Panc1 (cell line): ENCODE measurements at regions of chr2 and their contacts with region 1.

Region 1: GRCh38 chr2:240913810-240914644 is 7.9 kb downstream of the CROCC2 start:
- DNase-seq: peak; percentile 24
- ATAC-seq: peak; percentile 71
- H3K4me3 ChIP-seq: peak overlapping the region in 1 of 2 experiments; percentile 12; a peak in 1 of 4 replicates
- H3K27ac ChIP-seq: no peak overlapping the region
- H3K4me1 ChIP-seq: peaks cover 39% of the 10 kb centered on the region
- H3K27me3 ChIP-seq: no peaks in the 10 kb centered on the region
- CTCF ChIP-seq: peak; percentile 99

Region 2: DNA sequence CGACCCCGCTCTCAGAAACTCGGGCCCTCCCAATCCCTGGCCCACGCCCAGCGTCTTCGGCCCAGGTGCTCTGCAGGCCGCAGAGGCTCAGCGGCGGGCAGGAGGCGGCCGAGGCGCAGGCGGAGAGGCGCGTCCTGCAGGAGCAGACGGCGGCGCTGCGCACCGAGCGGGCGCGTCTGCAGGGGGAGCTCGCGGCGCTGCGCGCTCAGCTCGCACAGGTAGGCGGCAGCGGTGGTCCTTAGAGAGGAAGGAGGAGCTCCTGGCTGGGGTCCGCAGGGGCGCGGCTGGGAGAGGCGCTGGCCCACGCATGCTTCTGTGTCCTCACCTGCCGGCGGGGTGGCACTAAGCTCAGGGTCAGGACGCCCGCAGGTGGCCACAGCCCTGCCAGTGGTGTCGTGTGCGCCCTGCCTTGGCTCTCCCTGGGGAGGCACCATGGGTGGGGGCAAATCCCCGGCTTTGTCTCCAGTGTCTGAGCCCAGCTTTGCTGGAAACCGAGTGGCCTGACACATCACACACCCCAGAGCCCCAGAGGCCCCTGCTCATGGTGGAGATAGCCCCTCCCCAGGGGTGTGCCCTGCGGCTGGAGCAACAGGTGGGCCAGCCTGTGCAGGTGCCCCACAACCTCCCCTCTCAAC is 69.5 kb after region 1 on chr2:
- CTCF ChIA-PET with region 1: interaction called, 14 read pairs
- POLR2A ChIA-PET with region 1: no interaction called
- in situ Hi-C with region 1: no loop called
- intact Hi-C with region 1: loop called (anchors 2 kb)
- DNase-seq: no peak
- ATAC-seq: peak; percentile 93
- H3K4me3 ChIP-seq: peak overlapping the region in 1 of 2 experiments; percentile 25; a peak in 1 of 4 replicates
- H3K27ac ChIP-seq: no peak overlapping the region
- H3K4me1 ChIP-seq: peaks cover 14% of the 10 kb centered on the region
- H3K27me3 ChIP-seq: no peaks in the 10 kb centered on the region
- CTCF ChIP-seq: peak; percentile 95

Region 3: DNA sequence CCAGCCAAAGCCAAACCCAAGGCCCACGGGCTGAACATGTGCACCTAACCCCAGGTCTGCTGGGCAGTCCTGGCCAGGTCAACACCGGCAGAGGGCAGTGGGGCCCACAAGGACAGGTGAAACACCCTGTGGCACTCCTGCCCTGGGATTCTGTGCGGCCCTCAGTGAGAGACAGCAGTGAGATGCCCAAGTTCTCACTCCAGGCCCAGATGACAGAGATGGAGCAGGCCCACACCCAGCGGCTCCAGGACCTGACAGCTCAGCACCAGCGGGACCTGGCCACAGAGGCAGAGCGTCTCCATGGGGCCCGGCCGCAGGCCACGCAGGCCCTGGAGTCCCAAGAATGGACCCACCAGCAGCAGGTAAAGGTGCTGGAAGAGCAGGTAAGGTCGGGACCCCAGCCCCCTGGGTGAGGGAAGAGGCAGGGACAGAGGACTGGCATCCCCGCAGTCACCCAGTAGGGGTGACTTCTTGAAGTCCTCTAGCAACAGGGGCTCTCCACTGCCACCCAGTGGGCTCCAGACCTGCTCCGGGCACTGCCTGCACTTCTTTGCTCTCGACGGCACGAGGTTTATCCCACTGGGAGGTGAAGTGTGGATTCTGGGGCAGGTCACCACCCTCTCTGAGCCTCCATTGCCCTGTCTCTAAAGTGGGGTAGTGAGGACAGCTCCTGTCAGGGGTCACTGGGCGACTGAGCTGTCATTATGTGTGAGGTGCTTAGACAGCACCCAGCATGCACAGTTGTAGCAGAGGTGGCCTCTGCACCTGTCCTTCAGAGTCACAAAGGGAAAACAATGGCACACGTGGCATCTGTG is 75.6 kb after region 1 on chr2:
- CTCF ChIA-PET with region 1: interaction called, 4 read pairs
- POLR2A ChIA-PET with region 1: no interaction called
- in situ Hi-C with region 1: no loop called
- intact Hi-C with region 1: loop called (anchors 2 kb)
- DNase-seq: peak; percentile 20
- ATAC-seq: peak; percentile 81
- H3K4me3 ChIP-seq: no peak overlapping the region
- H3K27ac ChIP-seq: no peak overlapping the region
- H3K4me1 ChIP-seq: peaks cover 18% of the 10 kb centered on the region
- H3K27me3 ChIP-seq: no peaks in the 10 kb centered on the region
- CTCF ChIP-seq: peak; percentile 91

Region 4: GRCh38 chr2:241025639-241026038 is 111.6 kb after region 1 on chr2:
- CTCF ChIA-PET with region 1: interaction called, 11 read pairs
- POLR2A ChIA-PET with region 1: no interaction called
- in situ Hi-C with region 1: no loop called
- intact Hi-C with region 1: no loop called
- DNase-seq: no peak
- ATAC-seq: no peak
- H3K4me3 ChIP-seq: no peak overlapping the region
- H3K27ac ChIP-seq: no peak overlapping the region
- H3K4me1 ChIP-seq: no peaks in the 10 kb centered on the region
- H3K27me3 ChIP-seq: no peaks in the 10 kb centered on the region
- CTCF ChIP-seq: no peak